ENCODE measurements at regions of chr19 and their contacts with region 1.

Region 1: GRCh38 chr19:35648017-35648961 is at the start of gene COX6B1:
- DNase-seq: peak; percentile 95
- H3K4me3 Mint-ChIP-seq: peak within 1 kb of the TSS; percentile 99
- H3K27ac Mint-ChIP-seq: peak within 1 kb of the TSS; percentile 85
- H3K4me1 Mint-ChIP-seq: peaks cover 50% of the 10 kb centered on the region
- H3K27me3 Mint-ChIP-seq: no peaks in the 10 kb centered on the region
- total RNA-seq, gene COX6B1: 440 to 442 TPM

Region 2: DNA sequence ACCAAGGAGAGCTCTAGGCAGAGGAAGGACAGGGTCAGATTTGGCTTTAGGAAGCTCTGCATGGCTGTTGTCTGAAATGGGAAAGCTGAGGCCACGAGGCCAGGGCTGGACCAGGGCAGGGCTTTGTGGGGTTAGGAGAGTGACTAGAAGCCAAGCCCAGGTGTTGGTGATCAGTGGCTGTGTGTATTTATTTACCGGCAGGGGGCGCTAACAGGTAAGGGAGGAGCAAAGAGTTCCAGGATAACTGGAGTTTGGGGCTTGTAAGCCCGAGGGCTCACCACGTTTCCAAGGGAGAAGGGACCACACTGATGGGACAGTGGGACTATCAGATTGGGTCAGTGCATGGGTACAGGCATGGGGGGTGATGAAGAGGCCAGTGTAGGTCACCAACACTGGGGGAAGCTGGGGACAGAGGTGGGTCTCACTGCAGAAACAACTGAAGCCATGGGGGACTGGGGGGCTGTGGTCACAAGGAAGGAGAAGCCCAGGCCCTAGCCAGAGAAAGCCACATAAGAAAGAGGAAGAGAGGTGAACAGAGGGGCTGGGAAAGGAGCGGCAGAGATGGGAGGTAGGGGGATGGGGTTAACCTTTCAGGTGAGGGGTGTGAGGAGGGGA is 99.0 kb before region 1 on chr19:
- CTCF ChIA-PET with region 1: interaction called, 12 read pairs
- POLR2A ChIA-PET with region 1: interaction called, 4 read pairs
- DNase-seq: peak; percentile 65
- H3K4me3 Mint-ChIP-seq: peak overlapping the region; percentile 8
- H3K27ac Mint-ChIP-seq: no peak overlapping the region
- H3K4me1 Mint-ChIP-seq: peaks cover 28% of the 10 kb centered on the region
- H3K27me3 Mint-ChIP-seq: peaks cover 4% of the 10 kb centered on the region

Region 3: GRCh38 chr19:35612559-35613321 is 35.5 kb before region 1 on chr19 and contains the start of gene HAUS5:
- CTCF ChIA-PET with region 1: interaction called, 11 read pairs
- POLR2A ChIA-PET with region 1: interaction called, 22 read pairs
- DNase-seq: peak; percentile 97
- H3K4me3 Mint-ChIP-seq: peak within 1 kb of the TSS; percentile 84
- H3K27ac Mint-ChIP-seq: peak within 1 kb of the TSS; percentile 86
- H3K4me1 Mint-ChIP-seq: peaks cover 49% of the 10 kb centered on the region
- H3K27me3 Mint-ChIP-seq: no peaks in the 10 kb centered on the region
- total RNA-seq, gene HAUS5: 45.3 to 46.5 TPM

Region 4: DNA sequence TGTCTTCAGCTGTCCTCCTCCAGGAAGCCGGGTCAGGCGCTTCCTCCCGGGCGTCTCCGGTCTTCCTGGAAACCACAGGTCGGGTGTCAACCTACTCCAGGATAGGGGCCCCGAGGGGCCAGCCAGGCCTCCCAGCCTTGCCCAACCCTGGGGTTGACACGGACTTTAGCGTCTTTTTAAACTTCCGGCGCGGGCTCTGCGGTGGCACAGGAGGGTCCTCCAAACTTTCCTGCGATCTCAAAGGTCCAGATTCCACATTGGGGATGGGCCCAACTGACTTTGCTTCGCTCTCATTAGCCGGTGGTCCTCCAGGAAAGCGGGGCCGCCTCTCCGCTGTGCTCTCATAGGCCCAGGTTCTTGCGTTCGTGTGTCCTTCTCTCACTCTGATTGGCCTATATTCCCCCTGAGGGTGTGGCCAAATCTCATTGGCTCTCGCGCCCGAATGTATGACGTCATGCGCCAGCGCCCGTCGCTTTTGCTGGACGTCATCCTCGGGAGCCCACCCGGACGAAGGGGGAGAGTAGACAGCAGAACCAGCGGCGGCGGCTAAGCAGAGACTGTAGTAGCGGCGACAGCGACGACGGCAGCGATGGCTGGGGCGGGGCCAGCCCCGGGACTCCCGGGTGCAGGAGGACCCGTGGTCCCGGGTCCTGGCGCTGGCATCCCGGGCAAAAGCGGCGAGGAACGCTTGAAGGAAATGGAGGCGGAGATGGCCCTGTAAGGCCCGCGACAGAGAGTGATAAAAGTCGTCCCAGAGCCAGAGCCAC is 19.5 kb before region 1 on chr19 and contains the start of gene RBM42:
- CTCF ChIA-PET with region 1: interaction called, 3 read pairs
- POLR2A ChIA-PET with region 1: interaction called, 25 read pairs
- DNase-seq: peak; percentile 97
- H3K4me3 Mint-ChIP-seq: peak within 1 kb of the TSS; percentile 100
- H3K27ac Mint-ChIP-seq: peak within 1 kb of the TSS; percentile 98
- H3K4me1 Mint-ChIP-seq: peaks cover 21% of the 10 kb centered on the region
- H3K27me3 Mint-ChIP-seq: no peaks in the 10 kb centered on the region
- total RNA-seq, gene RBM42: 99.5 to 102 TPM

Region 5: GRCh38 chr19:35716801-35717666 is 68.7 kb after region 1 on chr19:
- CTCF ChIA-PET with region 1: interaction called, 6 read pairs
- POLR2A ChIA-PET with region 1: interaction called, 14 read pairs
- DNase-seq: peak; percentile 97
- H3K4me3 Mint-ChIP-seq: peak overlapping the region; percentile 92
- H3K27ac Mint-ChIP-seq: peak overlapping the region; percentile 99
- H3K4me1 Mint-ChIP-seq: peaks cover 60% of the 10 kb centered on the region
- H3K27me3 Mint-ChIP-seq: no peaks in the 10 kb centered on the region